T-cell (primary cell): ENCODE measurements at regions of chr16 and their contacts with region 1.

Region 1: GRCh38 chr16:29790183-29790952 is at the start of gene KIF22:
- DNase-seq: peak; percentile 99 to 100 (median 99)
- ATAC-seq: peak; percentile 93 to 97 (median 96)
- H3K4me3 ChIP-seq: peak within 1 kb of the TSS; percentile 84 to 94
- H3K4me3 Mint-ChIP-seq: peak within 1 kb of the TSS; percentile 93 to 98 (median 98)
- H3K27ac ChIP-seq: peak within 1 kb of the TSS; percentile 69
- H3K27ac Mint-ChIP-seq: peak within 1 kb of the TSS; percentile 98 to 99
- H3K4me1 ChIP-seq: peaks cover 13 to 43% of the 10 kb centered on the region in 2 experiments
- H3K4me1 Mint-ChIP-seq: peaks cover 46 to 50% (median 48%) of the 10 kb centered on the region in 3 donors
- H3K27me3 ChIP-seq: no peaks in the 10 kb centered on the region
- H3K27me3 Mint-ChIP-seq: no peaks in the 10 kb centered on the region
- total RNA-seq, gene KIF22: 84.1 to 95.2 (median 84.9) TPM

Region 2: GRCh38 chr16:29641561-29641960 is 148.8 kb before region 1 on chr16:
- CTCF ChIA-PET with region 1: no interaction called
- POLR2A ChIA-PET with region 1: no interaction called
- DNase-seq: peak in 2 of 35 experiments; percentile 6 to 56
- ATAC-seq: peak; percentile 33 to 72 (median 50)
- H3K4me3 ChIP-seq: no peak overlapping the region
- H3K4me3 Mint-ChIP-seq: peak overlapping the region in 1 of 3 donors; percentile 75
- H3K27ac ChIP-seq: peak overlapping the region; percentile 23
- H3K27ac Mint-ChIP-seq: peak overlapping the region; percentile 34 to 65
- H3K4me1 ChIP-seq: peaks cover 6 to 19% of the 10 kb centered on the region in 2 experiments
- H3K4me1 Mint-ChIP-seq: peaks cover 22 to 33% (median 30%) of the 10 kb centered on the region in 3 donors
- H3K27me3 ChIP-seq: no peaks in the 10 kb centered on the region
- H3K27me3 Mint-ChIP-seq: no peaks in the 10 kb centered on the region

Region 3: DNA sequence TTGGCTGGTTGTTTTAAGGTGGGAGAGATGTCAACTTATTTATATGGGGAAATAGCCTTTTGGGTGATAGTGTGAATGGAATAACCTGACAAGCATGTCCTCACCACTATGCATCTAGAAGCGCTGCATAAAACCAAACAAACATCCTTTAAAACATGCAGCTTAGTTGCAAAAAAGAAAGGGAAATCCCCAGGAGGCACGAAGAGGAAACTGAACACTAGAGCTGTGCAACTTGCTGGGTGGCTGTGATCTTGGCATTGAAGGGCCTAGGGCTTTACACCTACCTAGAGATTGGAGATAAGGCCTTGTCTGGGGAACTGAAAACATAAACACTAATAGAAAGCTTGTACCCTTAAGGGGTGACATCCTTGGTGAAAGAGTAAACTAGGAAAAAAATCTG is 51.9 kb before region 1 on chr16:
- CTCF ChIA-PET with region 1: interaction called, 6 to 11 read pairs
- POLR2A ChIA-PET with region 1: interaction called, 10 to 14 read pairs
- DNase-seq: peak in 33 of 35 experiments; percentile 40 to 89 (median 66)
- ATAC-seq: peak; percentile 89 to 95 (median 90)
- H3K4me3 ChIP-seq: no peak overlapping the region
- H3K4me3 Mint-ChIP-seq: peak overlapping the region; percentile 37 to 73 (median 66)
- H3K27ac ChIP-seq: peak overlapping the region; percentile 70
- H3K27ac Mint-ChIP-seq: peak overlapping the region; percentile 92 to 93
- H3K4me1 ChIP-seq: peaks cover 54 to 72% of the 10 kb centered on the region in 2 experiments
- H3K4me1 Mint-ChIP-seq: peaks cover 82 to 86% (median 85%) of the 10 kb centered on the region in 3 donors
- H3K27me3 ChIP-seq: no peaks in the 10 kb centered on the region
- H3K27me3 Mint-ChIP-seq: no peaks in the 10 kb centered on the region

Region 4: GRCh38 chr16:29745853-29746345 is 44.5 kb before region 1 on chr16 and contains the start of gene C16orf54:
- CTCF ChIA-PET with region 1: interaction called in 1 of 2 experiments, 14 read pairs
- POLR2A ChIA-PET with region 1: interaction called, 3 to 7 read pairs
- DNase-seq: peak; percentile 86 to 97 (median 94)
- ATAC-seq: peak; percentile 83 to 89 (median 86)
- H3K4me3 ChIP-seq: peak within 1 kb of the TSS; percentile 80 to 94
- H3K4me3 Mint-ChIP-seq: peak within 1 kb of the TSS; percentile 98 to 99 (median 98)
- H3K27ac ChIP-seq: peak within 1 kb of the TSS; percentile 98
- H3K27ac Mint-ChIP-seq: peak within 1 kb of the TSS; percentile 98 to 99
- H3K4me1 ChIP-seq: peaks cover 44 to 74% of the 10 kb centered on the region in 2 experiments
- H3K4me1 Mint-ChIP-seq: peaks cover 64 to 70% (median 65%) of the 10 kb centered on the region in 3 donors
- H3K27me3 ChIP-seq: no peaks in the 10 kb centered on the region
- H3K27me3 Mint-ChIP-seq: peaks cover 0 to 2% of the 10 kb centered on the region in 2 donors
- total RNA-seq, gene C16orf54: 122 to 194 (median 142) TPM

Region 5: DNA sequence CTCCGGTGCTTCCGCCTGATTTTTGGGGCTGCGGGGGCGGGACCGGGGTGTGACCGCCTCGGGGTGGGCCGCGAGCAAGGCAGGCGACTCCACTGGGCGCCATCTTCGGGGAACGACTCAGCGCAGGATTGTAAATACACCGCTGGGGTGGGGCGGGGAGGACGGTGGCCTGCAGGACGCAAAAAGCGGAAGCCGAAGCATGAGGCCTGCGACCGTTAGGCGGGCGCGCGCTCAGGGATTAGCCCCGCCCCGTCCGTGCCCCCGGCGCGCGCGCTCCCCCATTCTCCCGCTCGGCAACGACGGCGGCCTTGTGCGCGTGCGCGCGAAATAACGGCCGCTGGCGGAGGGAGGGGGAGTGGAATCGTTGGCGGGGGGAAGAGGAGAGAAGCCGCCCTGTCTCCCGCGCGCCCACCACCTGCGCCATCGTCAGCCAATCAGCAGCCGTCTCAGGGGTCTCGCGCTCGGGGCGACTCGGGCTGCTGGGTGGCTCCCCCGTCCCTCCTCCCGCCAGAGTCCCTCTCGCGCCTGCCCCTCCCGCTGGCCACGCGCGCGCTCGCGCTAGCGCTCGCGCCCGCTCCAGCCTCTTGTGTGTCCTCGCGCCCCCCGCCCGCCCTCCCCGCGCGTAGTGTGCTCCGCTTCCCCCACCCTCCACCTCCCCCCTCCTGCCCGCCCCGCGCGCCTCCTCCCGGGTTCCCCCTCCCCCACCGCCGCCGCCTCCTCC is 15.2 kb after region 1 on chr16:
- CTCF ChIA-PET with region 1: interaction called in 1 of 2 experiments, 13 read pairs
- POLR2A ChIA-PET with region 1: interaction called, 3 read pairs
- DNase-seq: peak; percentile 96 to 99 (median 98)
- ATAC-seq: peak; percentile 64 to 71 (median 68)
- H3K4me3 ChIP-seq: peak overlapping the region; percentile 83 to 88
- H3K4me3 Mint-ChIP-seq: peak overlapping the region; percentile 84 to 100 (median 96)
- H3K27ac ChIP-seq: peak overlapping the region; percentile 90
- H3K27ac Mint-ChIP-seq: peak overlapping the region; percentile 99 to 100
- H3K4me1 ChIP-seq: peaks cover 28 to 49% of the 10 kb centered on the region in 2 experiments
- H3K4me1 Mint-ChIP-seq: peaks cover 43 to 45% (median 45%) of the 10 kb centered on the region in 3 donors
- H3K27me3 ChIP-seq: no peaks in the 10 kb centered on the region
- H3K27me3 Mint-ChIP-seq: no peaks in the 10 kb centered on the region

Region 6: DNA sequence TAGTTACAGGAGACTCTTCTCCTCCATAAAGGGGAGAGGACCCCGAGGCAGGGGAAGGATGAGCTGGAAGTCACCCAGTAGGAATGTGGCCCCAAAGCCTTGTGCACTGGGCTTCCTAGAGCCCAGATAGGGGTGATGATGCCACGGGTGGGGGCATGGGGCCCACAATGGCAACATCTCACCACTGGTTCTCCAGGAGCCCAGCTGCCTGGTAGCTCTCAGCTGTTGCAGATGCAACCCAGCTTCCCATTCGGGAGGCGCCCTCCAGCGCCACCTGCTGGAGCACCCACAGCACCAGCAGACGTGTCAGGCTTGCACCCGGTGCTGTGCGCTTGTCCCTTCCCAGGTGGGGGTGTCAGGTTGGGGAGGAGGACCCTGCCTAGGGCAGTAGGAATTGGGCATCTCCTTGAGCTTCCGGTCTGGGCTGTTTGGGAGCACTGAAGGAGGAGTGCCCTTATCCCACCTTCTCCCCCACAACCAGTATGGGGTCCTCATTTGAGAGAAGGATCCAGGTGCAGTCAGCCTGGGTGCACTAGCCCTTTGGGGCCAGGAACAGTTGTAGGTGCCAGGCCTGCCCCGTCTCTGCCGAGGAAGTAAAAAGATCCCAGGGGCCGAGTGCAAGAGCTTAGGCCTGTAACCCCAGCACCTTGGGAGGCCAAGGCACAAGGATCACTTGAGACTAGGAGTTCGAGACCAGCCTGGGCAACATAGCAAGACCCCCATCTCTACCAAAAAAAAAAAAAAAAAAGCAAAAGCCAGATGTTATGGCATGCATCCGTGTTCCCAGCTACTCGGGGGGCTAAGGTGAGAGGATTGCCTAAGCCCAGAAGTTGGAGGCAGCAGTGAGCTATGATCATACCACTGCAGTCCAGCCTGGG is 58.3 kb after region 1 on chr16:
- CTCF ChIA-PET with region 1: interaction called in 1 of 2 experiments, 11 read pairs
- POLR2A ChIA-PET with region 1: no interaction called
- DNase-seq: peak; percentile 59 to 88 (median 78)
- ATAC-seq: peak; percentile 90 to 94 (median 92)
- H3K4me3 ChIP-seq: no peak overlapping the region
- H3K4me3 Mint-ChIP-seq: no peak overlapping the region
- H3K27ac ChIP-seq: no peak overlapping the region
- H3K27ac Mint-ChIP-seq: peak overlapping the region; percentile 69 to 72
- H3K4me1 ChIP-seq: peaks cover 0 to 9% of the 10 kb centered on the region in 2 experiments
- H3K4me1 Mint-ChIP-seq: peaks cover 5 to 13% (median 12%) of the 10 kb centered on the region in 3 donors
- H3K27me3 ChIP-seq: no peaks in the 10 kb centered on the region
- H3K27me3 Mint-ChIP-seq: no peaks in the 10 kb centered on the region

Region 7: DNA sequence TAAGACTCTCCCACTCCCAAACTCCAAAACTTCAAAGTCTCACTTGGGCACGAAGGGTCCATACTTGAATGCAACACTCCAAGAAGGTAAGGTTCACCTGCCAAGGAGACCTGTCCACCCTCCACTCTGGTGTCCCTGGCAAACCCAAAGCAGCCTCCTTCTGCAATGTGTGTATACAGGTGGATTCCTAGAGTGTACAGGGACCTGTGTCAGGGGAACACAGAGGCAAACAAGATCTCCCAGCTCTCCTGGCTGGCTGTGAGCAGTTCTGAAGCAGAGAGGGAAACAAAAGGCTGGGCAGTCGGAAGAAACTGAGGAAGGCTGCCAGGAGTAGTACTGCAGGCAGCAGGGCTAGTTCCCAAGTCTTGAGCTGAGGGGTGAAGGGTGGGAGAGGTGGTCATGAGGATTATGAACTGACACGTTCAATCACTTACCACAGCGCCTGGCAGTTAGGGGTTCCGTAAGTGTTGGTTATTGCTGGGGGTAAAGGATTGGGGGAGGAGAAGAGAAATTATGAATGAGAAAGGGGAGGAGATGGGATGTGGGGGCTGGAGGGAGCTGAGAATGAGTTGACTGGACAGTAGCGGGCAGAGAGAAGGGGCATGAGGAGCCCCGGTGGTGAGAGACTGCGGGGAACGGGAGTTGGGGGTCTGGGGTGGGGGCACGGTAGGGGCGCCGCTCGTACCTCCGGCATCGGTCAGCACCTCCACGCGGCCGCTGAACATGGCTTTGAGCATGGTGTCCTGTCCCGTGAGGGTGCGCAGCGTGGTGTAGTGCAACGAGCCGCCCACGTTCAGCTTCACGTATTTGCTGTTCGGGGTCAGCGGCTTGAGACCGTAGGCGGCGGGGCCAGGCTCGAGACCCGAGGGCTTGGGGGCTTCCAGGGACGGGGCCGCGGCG is 135.0 kb after region 1 on chr16:
- CTCF ChIA-PET with region 1: no interaction called
- POLR2A ChIA-PET with region 1: no interaction called
- DNase-seq: peak in 8 of 35 experiments; percentile 2 to 23 (median 8)
- ATAC-seq: peak in 2 of 4 experiments; percentile 28 to 34
- H3K4me3 ChIP-seq: peak overlapping the region; percentile 87 to 88
- H3K4me3 Mint-ChIP-seq: peak overlapping the region; percentile 87 to 91 (median 90)
- H3K27ac ChIP-seq: no peak overlapping the region
- H3K27ac Mint-ChIP-seq: peak overlapping the region; percentile 68 to 70
- H3K4me1 ChIP-seq: peaks cover 15 to 28% of the 10 kb centered on the region in 2 experiments
- H3K4me1 Mint-ChIP-seq: peaks cover 44 to 53% (median 48%) of the 10 kb centered on the region in 3 donors
- H3K27me3 ChIP-seq: no peaks in the 10 kb centered on the region
- H3K27me3 Mint-ChIP-seq: no peaks in the 10 kb centered on the region

Region 8: DNA sequence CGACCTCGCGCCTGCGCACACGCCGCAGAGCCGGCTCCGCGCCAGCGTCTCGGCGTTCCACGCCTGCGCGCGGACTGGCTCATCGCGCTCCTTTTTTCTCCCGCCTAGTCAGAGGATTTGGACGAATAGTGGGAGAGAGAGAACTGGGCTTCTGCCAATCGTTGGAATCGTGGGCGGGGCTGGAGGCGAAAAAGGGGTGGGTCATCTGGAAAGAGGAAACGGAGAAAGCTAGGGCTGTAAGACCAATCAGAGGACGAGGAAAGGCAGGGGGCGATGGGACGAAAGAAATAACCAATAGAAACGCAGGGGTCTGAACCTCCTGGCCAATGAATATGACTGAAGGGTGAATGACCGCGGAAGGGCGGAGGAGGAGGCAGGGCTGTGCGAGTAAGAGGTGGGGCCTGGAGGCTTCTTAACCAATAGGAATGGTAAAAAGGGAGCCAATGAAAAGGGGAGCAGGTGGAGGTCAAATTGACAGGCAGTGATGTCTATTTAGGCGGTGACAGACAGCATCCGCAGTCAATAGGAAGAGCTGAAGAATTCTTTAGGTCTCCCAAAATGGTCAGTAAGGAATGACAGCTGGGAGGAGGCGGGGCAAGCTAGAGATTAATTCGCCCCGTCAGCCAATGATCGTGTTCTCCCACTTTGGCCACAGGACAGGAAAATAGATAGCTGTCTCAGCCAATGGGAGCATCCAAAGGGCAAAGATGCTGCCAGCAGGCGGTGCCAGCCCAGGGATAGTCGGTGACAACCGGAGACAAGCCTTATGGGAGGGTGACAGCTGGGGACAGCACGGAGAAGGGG is 580.3 kb after region 1 on chr16 and contains the start of gene TBC1D10B:
- CTCF ChIA-PET with region 1: no interaction called
- POLR2A ChIA-PET with region 1: no interaction called
- DNase-seq: peak; percentile 96 to 100 (median 99)
- ATAC-seq: peak; percentile 83 to 86 (median 84)
- H3K4me3 ChIP-seq: peak within 1 kb of the TSS; percentile 62 to 66
- H3K4me3 Mint-ChIP-seq: peak within 1 kb of the TSS; percentile 85 to 91 (median 86)
- H3K27ac ChIP-seq: peak within 1 kb of the TSS; percentile 73
- H3K27ac Mint-ChIP-seq: peak within 1 kb of the TSS; percentile 93 to 95
- H3K4me1 ChIP-seq: peaks cover 22 to 44% of the 10 kb centered on the region in 2 experiments
- H3K4me1 Mint-ChIP-seq: peaks cover 45 to 49% (median 46%) of the 10 kb centered on the region in 3 donors
- H3K27me3 ChIP-seq: no peaks in the 10 kb centered on the region
- H3K27me3 Mint-ChIP-seq: no peaks in the 10 kb centered on the region
- total RNA-seq, gene TBC1D10B: 24.0 to 60.1 (median 52.5) TPM